Calu3 (cell line): ENCODE measurements at regions of chr22 and their contacts with region 1.

Region 1: DNA sequence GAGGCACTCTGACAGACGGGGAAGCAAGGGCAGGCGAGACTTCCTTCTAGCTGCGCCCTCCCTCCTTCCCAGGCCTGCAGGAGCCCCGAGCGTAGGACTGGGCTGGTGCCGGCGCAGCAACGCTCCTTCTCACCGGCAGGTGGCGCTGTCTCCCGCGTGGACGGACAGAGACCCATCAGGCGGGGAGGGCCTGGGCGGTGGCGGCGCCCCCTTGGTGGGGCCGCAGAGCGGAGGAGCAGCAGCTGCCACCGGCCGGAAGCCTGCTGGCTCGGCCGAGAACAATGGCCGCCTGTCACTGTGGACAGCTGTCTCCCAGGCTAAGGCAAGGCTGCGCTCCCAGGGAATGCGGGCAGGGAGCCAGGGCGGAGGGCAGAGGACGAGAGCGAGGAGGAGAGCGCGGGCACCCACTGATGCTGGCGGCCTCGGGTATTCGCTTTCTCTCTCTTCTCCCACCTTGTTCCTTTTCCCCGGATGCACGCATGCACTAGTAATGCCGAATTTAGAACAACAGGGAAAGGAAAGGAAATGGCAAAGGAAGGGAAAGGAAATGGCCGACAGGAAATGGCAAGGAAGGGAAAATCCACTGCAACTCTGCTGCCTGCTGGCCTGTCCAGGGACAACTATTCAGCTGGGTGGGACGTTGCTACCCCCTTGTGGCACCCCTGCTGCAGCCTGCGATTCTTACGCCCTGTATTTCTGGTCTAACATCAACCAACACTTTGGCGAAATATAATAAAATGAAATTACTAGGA is 14.4 kb downstream of the PPM1F start:
- DNase-seq: peak; percentile 94
- H3K4me3 Mint-ChIP-seq: peak overlapping the region; percentile 79
- H3K27ac Mint-ChIP-seq: peak overlapping the region; percentile 55
- H3K4me1 Mint-ChIP-seq: peaks cover 31% of the 10 kb centered on the region
- H3K27me3 Mint-ChIP-seq: no peaks in the 10 kb centered on the region
- CTCF ChIP-seq: peak; percentile 87

Region 2: GRCh38 chr22:21712894-21713712 is 225.1 kb before region 1 on chr22:
- CTCF ChIA-PET with region 1: interaction called, 4 read pairs
- intact Hi-C with region 1: loop called (anchors 2 kb)
- DNase-seq: peak; percentile 69
- H3K4me3 Mint-ChIP-seq: peak overlapping the region; percentile 32
- H3K27ac Mint-ChIP-seq: no peak overlapping the region
- H3K4me1 Mint-ChIP-seq: peaks cover 10% of the 10 kb centered on the region
- H3K27me3 Mint-ChIP-seq: no peaks in the 10 kb centered on the region
- CTCF ChIP-seq: peak; percentile 79

Region 3: GRCh38 chr22:22019659-22020424 is 81.6 kb after region 1 on chr22:
- CTCF ChIA-PET with region 1: no interaction called
- intact Hi-C with region 1: no loop called
- DNase-seq: no peak
- H3K4me3 Mint-ChIP-seq: no peak overlapping the region
- H3K27ac Mint-ChIP-seq: no peak overlapping the region
- H3K4me1 Mint-ChIP-seq: no peaks in the 10 kb centered on the region
- H3K27me3 Mint-ChIP-seq: peaks cover 89% of the 10 kb centered on the region
- CTCF ChIP-seq: no peak